Right ventricle myocardium inferior (tissue), 1 donor: ENCODE measurements at regions of chr4 and their contacts with region 1.

Region 1: DNA sequence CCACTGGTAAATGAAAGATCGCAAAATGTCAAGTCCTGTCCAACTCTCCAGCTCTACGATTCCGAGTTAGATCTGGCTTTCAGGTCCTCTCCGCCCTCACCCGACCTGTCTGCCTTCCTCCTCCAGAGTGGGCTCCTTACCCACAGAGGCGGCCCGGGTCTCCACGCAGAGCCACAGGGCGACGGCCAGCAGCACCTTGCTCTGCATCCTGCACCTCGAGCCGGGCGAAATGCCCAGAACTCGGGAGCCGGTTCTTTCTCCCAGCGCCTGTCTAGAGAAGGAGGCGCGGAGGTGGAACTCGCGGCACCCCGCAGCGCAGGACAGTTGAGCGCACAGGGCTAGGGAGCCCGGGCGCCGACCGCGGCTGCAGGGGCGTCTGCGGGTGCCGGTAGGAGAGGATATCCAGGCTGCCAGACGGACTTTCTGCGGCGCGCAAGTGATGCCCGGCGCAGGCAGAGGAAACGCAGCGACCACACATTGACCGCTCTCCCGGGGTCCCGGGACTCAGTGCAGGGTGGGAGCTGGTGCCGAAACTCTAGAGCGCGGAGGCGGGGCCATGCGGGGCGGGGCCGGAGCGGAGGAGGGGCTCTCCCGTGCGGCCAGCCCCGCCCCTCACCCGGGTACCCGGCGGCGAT is at the start of gene KDR:
- DNase-seq: peak; percentile 72
- ATAC-seq: peak; percentile 88
- total RNA-seq, gene KDR: 23.2 TPM

Region 2: DNA sequence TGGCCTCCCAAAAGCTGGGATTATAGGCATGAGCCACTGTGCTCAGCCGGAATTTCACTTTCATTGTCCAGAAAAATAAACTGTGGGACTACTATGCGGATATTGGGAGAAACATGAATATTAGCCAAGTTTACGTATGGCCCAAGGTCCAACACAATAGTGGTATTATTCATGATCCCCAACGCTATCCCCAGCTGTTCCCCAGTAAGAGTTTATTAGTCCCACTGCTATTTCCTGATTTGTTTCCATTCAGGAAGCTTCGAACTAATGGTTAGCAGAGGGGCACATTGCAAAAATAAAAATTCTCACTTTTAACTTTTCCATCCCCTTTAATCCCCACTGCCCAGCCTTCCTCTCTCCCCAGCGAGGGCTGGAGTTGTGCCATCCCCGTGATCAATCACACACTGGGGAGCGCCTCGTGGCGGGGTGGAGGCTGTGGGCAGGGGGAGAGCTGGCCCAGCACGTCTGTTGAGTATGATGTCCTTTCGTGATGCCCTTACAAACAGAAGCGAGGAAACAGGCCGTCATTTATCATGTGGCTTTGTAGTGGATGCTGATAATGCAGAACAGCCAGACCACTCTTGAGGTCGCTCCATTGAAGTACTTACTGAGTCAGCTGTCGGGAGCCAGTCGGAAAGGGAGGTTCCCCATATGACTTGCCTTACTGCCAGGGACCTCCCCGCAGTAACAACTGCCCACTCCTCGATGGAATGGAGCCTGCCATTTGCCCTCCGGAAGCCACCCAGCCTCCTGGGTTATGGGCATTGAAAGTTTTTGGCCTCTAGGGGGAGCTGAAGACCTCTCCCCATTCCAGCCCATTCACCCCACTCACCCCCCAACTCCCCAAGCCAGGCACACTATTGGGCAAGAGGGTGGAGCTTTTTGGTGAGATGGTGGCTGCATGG is 116.8 kb before region 1 on chr4:
- intact Hi-C with region 1: loop called (anchors 5 kb)
- DNase-seq: no peak
- ATAC-seq: no peak

Region 3: DNA sequence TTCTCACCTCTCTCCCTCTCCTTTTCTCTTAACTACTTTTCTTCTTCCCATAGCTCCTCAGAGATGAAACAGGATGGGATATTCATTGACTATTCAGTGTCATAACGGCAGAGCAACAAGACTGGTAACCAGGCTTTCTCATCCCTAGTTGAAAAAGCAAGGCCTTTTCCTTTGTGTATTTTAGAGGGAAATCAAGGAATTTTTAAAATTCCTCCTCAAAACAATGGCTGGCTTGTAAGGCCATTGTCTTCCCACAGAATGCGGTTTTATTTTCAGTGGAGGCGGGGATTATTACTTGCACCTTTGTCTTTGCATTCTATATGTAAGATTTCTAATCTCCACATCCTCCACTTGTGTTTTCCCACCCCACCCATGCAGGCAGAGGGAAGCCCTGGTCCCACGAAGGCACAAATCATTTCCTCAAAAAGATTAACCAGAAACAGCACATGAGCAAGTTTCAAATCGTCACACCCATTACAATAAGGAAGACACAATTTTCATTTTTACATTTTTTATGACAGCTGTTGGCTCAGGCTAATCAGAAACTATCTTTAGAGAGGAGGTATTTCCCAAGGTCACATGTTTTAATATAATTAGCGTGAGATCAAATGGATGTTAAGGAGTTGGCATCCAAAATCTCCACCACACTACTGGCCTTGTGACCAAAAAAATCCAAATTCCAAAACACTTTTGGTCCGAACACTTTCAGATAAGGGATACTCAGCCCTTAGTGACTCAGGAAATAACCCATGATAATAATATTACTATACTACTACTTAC is 53.2 kb after region 1 on chr4:
- intact Hi-C with region 1: loop called (anchors 2 kb)
- DNase-seq: no peak
- ATAC-seq: no peak